Aorta (tissue), 5 donors: ENCODE measurements at regions of chr6 and their contacts with region 1.

Region 1: DNA sequence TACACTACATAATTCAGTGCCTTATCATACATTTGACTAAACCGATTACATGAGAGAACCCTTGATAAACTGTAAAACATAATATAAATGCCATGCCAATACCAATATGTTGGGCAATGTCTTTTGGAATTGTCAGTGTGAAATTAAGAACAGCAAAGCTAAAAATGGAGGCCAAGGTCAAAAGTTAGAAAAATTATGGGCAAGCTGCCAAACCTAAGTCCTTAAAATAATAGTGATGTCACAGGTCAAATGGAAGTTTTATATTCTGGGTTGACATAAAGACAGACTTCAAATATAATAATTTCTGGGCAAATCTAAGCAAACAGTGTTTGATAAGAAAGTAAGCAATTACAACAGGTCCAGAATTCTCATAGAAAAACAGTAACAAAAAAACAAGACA is 696.7 kb downstream of the RNF144B start:
- DNase-seq: no peak
- ATAC-seq: no peak
- H3K4me3 ChIP-seq: no peak overlapping the region
- H3K27ac ChIP-seq: no peak overlapping the region
- H3K4me1 ChIP-seq: no peaks in the 10 kb centered on the region
- H3K27me3 ChIP-seq: no peaks in the 10 kb centered on the region

Region 2: DNA sequence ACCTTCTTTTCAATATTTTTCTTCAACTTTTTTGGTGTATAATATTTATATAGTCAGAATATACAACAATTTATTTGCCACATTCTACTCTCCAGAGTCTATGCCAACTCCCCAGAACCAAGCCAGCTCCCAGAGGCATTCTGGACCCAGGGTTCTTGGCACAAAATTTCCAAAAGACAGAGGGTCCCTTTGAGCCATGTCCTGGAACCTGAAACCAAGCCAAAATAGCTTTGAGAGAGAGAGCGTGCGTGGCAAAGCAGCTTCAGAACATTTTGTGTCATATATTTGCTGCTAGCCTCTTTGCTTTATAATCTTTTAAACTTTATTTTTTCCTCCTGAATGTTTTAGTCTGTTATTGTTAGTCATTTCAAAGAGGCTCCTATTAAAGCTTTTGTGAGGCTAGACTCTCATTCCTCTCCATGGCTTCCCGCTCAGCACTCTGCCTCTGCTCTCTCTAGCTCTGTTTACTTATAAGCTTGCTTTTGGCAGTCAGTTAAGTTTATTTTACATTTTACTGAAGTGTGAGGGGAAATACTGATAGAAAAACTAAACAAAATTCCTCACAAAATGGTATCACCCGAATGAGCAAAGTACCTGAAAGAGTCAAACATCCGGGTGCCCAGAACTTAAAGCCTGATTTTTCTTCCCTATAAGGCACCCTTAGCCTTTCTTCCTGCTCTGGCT is 148.2 kb after region 1 on chr6:
- intact Hi-C with region 1: loop called in 1 of 2 experiments (anchors 10 kb)
- DNase-seq: peak in 1 of 2 donors; percentile 20
- ATAC-seq: no peak
- H3K4me3 ChIP-seq: no peak overlapping the region
- H3K27ac ChIP-seq: peak overlapping the region; percentile 63 to 76
- H3K4me1 ChIP-seq: no peaks in the 10 kb centered on the region
- H3K27me3 ChIP-seq: no peaks in the 10 kb centered on the region